ENCODE measurements at regions of chr2 and their contacts with region 1.

Region 1: DNA sequence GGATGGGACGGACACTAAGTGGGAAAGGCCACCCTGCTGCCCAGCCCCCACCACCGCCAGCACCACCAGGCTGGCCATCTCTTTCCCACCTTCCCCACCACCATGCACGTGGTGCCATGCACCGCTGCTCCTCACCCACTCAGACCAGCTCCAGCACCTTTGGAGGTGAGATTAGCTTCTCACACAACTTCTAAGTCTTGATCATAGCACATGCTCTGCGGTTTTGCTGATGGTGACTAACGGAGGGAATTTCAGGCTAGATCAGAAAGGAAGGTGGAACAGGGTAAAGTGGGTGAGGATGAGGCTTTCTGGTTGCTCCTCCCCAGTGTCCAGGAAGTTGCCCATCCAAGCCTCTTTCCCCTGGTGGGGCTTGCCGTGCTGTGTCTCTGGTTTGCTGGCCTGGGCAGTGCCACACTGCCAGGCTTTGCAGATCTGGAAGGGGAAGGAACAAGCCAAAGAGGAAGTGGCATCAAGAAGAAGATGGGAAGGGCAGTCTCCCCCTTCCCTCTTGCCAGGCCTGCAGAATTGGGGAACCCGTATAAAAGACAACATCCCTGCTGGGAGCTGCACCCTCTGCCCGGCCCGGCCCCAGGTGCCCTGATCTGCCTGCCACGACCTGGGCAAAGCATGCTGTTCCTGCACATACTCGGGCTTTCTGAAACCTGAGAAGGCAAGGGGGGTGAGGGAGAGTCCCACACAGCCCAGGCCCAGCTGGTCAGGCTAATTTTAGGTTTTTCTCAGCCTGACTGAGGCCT is 44.3 kb upstream of the CAB39 start:
- DNase-seq: peak; percentile 89 to 94
- ATAC-seq: peak; percentile 84 to 87
- H3K4me3 ChIP-seq: peak overlapping the region in 2 of 4 donors; percentile 5 to 9
- H3K27ac ChIP-seq: peak overlapping the region; percentile 86 to 89 (median 88)
- H3K4me1 ChIP-seq: peaks cover 67 to 83% of the 10 kb centered on the region in 2 donors
- H3K27me3 ChIP-seq: no peaks in the 10 kb centered on the region
- CTCF ChIP-seq: no peak
- POLR2A ChIP-seq: no peak

Region 2: DNA sequence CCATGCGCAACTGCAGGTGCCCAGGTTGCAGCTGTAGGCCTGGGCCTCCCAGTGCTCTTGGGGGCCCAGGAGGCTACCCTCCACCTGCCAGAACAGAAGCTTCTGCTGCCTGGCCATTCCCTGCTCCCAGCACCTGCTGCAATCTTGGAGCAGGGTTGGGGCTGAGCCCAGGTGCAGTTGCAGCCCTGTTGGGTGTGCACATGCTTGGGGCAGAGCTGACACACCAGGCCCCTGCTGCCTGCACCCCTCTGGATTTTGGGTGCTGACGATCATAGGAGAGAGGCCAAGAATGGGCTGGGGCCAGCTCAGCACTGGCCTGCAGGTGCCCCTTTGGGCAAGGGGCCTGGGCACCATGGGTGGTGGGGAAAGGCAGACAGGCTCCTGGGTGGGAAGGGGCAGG is 361.9 kb before region 1 on chr2:
- in situ Hi-C with region 1: no loop called
- intact Hi-C with region 1: no loop called
- DNase-seq: no peak
- ATAC-seq: no peak
- H3K4me3 ChIP-seq: no peak overlapping the region
- H3K27ac ChIP-seq: no peak overlapping the region
- H3K4me1 ChIP-seq: no peaks in the 10 kb centered on the region
- H3K27me3 ChIP-seq: no peaks in the 10 kb centered on the region
- CTCF ChIP-seq: no peak
- POLR2A ChIP-seq: no peak

Region 3: GRCh38 chr2:230687498-230687897 is 19.1 kb after region 1 on chr2:
- in situ Hi-C with region 1: no loop called
- intact Hi-C with region 1: loop called (anchors 2 kb)
- DNase-seq: peak; percentile 71 to 77
- ATAC-seq: peak; percentile 95 to 99
- H3K4me3 ChIP-seq: peak overlapping the region in 2 of 4 donors; percentile 13 to 23
- H3K27ac ChIP-seq: peak overlapping the region; percentile 73 to 88 (median 78)
- H3K4me1 ChIP-seq: peaks cover 22 to 37% of the 10 kb centered on the region in 2 donors
- H3K27me3 ChIP-seq: no peaks in the 10 kb centered on the region
- CTCF ChIP-seq: no peak
- POLR2A ChIP-seq: no peak

Region 4: DNA sequence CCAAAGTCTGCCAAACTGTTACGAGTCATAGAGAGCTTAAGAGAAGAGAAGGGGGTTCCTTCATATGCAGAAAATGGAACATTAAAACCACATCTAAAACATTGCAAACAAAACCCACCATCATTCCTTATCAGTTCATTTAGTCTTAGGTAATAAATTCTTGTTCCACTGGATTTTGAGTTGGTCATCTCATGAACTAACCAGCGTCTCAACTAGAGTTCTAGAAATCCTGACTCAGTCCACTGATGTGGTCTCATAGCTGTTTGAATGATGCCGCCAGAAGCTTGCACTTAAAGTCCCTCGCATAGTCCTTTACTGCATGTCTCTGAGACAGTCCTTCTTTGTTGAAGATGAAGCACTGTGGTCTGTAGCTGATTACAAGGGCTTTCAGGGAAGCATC is 29.3 kb after region 1 on chr2:
- in situ Hi-C with region 1: no loop called
- intact Hi-C with region 1: no loop called
- DNase-seq: no peak
- ATAC-seq: no peak
- H3K4me3 ChIP-seq: no peak overlapping the region
- H3K27ac ChIP-seq: no peak overlapping the region
- H3K4me1 ChIP-seq: peaks cover 0 to 5% of the 10 kb centered on the region in 2 donors
- H3K27me3 ChIP-seq: no peaks in the 10 kb centered on the region
- CTCF ChIP-seq: no peak
- POLR2A ChIP-seq: no peak

Region 5: GRCh38 chr2:230712443-230713330 is 44.3 kb after region 1 on chr2 and contains the start of gene CAB39:
- in situ Hi-C with region 1: no loop called
- intact Hi-C with region 1: loop called (anchors 1 kb)
- DNase-seq: peak; percentile 69 to 83
- ATAC-seq: peak; percentile 81 to 84
- H3K4me3 ChIP-seq: peak within 1 kb of the TSS; percentile 80 to 91 (median 87)
- H3K27ac ChIP-seq: peak within 1 kb of the TSS; percentile 81 to 98 (median 93)
- H3K4me1 ChIP-seq: peaks cover 31 to 35% of the 10 kb centered on the region in 2 donors
- H3K27me3 ChIP-seq: no peaks in the 10 kb centered on the region
- CTCF ChIP-seq: peak; percentile 74 to 94 (median 92)
- POLR2A ChIP-seq: peak; percentile 93 to 95
- total RNA-seq, gene CAB39: 93.9 to 211 (median 133) TPM

Region 6: DNA sequence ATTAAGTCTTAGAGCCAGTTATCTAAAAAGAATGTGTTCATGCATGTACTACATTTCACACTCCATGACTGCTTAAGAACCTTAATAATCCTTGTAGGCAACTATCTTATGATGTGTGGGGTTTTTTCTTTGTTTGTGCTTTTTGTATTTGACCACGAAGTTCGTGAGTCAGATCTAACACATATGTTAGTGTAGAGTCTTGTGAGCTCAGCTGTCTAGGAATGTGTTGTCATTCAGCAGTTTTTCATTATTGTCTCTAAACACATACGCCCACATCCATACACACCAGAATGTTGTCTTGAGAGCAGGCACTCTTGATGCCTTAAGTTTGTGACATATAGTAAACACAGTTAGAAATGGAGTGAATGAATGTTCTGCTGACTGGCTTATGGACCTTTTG is 82.7 kb after region 1 on chr2:
- in situ Hi-C with region 1: no loop called
- intact Hi-C with region 1: no loop called
- DNase-seq: no peak
- ATAC-seq: no peak
- H3K4me3 ChIP-seq: no peak overlapping the region
- H3K27ac ChIP-seq: no peak overlapping the region
- H3K4me1 ChIP-seq: peaks cover 35 to 40% of the 10 kb centered on the region in 2 donors
- H3K27me3 ChIP-seq: no peaks in the 10 kb centered on the region
- CTCF ChIP-seq: no peak
- POLR2A ChIP-seq: no peak

Region 7: GRCh38 chr2:230781130-230781797 is 112.9 kb after region 1 on chr2:
- in situ Hi-C with region 1: no loop called
- intact Hi-C with region 1: loop called (anchors 5 kb)
- DNase-seq: peak; percentile 58 to 76
- ATAC-seq: peak; percentile 92 to 95
- H3K4me3 ChIP-seq: no peak overlapping the region
- H3K27ac ChIP-seq: peak overlapping the region; percentile 67 to 84 (median 81)
- H3K4me1 ChIP-seq: peaks cover 65 to 83% of the 10 kb centered on the region in 2 donors
- H3K27me3 ChIP-seq: no peaks in the 10 kb centered on the region
- CTCF ChIP-seq: no peak
- POLR2A ChIP-seq: no peak

Region 8: DNA sequence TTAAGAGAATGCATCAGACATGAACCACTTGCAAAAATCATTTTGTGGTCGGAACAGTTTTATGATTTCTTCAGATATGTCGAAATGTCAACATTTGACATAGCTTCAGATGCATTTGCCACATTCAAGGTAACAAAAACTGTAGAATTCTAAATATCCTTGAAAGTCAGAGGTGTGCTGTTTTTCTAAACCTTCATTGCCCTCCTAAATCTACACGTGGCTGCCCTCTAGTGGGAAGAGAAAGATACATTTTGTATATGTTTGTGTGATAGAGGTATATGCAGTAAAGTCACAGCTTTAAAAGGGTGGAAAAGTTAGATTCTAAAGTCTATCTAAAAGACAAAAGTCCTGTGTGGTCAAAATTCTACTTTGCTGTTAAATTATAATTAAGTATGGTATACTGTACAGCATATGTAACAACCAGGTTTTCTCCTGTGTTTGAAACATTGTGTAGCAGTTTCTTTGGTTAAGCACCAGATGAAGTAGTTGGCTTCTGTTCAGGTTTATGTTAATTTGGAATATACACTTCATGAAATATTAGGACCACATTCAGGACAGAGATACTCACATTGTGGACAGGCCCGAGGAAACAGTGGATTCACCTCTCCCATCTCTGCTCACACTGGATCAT is 130.5 kb after region 1 on chr2:
- in situ Hi-C with region 1: no loop called
- intact Hi-C with region 1: loop called (anchors 5 kb)
- DNase-seq: no peak
- ATAC-seq: peak in 1 of 2 donors; percentile 27
- H3K4me3 ChIP-seq: no peak overlapping the region
- H3K27ac ChIP-seq: peak overlapping the region in 3 of 4 donors; percentile 67 to 79 (median 68)
- H3K4me1 ChIP-seq: peaks cover 41 to 52% of the 10 kb centered on the region in 2 donors
- H3K27me3 ChIP-seq: no peaks in the 10 kb centered on the region
- CTCF ChIP-seq: peak; percentile 38 to 76 (median 65)
- POLR2A ChIP-seq: no peak

Region 9: GRCh38 chr2:230814616-230815015 is 146.3 kb after region 1 on chr2:
- in situ Hi-C with region 1: no loop called
- intact Hi-C with region 1: loop called (anchors 5 kb)
- DNase-seq: no peak
- ATAC-seq: no peak
- H3K4me3 ChIP-seq: no peak overlapping the region
- H3K27ac ChIP-seq: no peak overlapping the region
- H3K4me1 ChIP-seq: peaks cover 15 to 16% of the 10 kb centered on the region in 2 donors
- H3K27me3 ChIP-seq: no peaks in the 10 kb centered on the region
- CTCF ChIP-seq: peak in 3 of 5 experiments; percentile 4 to 33 (median 18)
- POLR2A ChIP-seq: no peak

Measured in gastrocnemius medialis (tissue), 4 donors.